ENCODE measurements at regions of chr14 and their contacts with region 1.

Region 1: GRCh38 chr14:84323978-84324377 is 1206.0 kb upstream of the FLRT2 start:
- DNase-seq: peak; percentile 57
- H3K4me3 ChIP-seq: no peak overlapping the region
- H3K27ac ChIP-seq: peak overlapping the region; percentile 64
- H3K4me1 ChIP-seq: peaks cover 16% of the 10 kb centered on the region
- H3K27me3 ChIP-seq: no peaks in the 10 kb centered on the region
- CTCF ChIP-seq: no peak
- POLR2A ChIP-seq: no peak

Region 2: DNA sequence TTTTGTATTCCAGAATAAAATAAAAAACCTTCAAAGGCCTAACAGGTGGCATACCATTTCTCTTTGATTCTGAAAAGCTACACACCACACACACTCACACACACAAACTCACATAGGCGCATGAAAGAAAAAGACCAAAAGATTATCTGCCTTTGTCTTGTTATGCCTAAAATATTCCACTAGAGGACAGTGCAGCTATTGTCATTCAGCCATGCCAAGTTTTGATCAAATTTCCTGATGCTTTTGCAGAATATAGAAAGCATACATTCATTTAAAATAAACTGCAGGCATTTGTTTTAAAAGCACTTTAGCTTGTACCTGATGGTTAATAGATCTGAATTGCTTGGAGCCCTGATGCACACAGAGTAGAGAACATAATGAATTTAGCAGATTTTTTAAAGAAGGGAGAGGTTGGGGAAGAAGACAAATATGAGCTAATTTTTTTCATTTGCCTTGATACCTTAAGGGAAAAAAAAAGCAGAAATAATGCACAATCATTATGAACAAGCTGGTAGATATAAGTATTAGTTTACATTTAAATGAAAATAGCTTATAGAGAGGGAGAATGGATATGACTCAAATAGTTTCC is 1023.4 kb before region 1 on chr14:
- CTCF ChIA-PET with region 1: interaction called, 10 read pairs
- POLR2A ChIA-PET with region 1: no interaction called
- dilution Hi-C with region 1: no loop called
- intact Hi-C with region 1: no loop called
- DNase-seq: peak; percentile 49
- H3K4me3 ChIP-seq: no peak overlapping the region
- H3K27ac ChIP-seq: no peak overlapping the region
- H3K4me1 ChIP-seq: no peaks in the 10 kb centered on the region
- H3K27me3 ChIP-seq: no peaks in the 10 kb centered on the region
- CTCF ChIP-seq: peak; percentile 62 to 68
- POLR2A ChIP-seq: no peak

Region 3: GRCh38 chr14:84036840-84037239 is 287.1 kb before region 1 on chr14:
- CTCF ChIA-PET with region 1: no interaction called
- POLR2A ChIA-PET with region 1: no interaction called
- dilution Hi-C with region 1: no loop called
- intact Hi-C with region 1: no loop called
- DNase-seq: peak; percentile 74
- H3K4me3 ChIP-seq: no peak overlapping the region
- H3K27ac ChIP-seq: no peak overlapping the region
- H3K4me1 ChIP-seq: no peaks in the 10 kb centered on the region
- H3K27me3 ChIP-seq: no peaks in the 10 kb centered on the region
- CTCF ChIP-seq: no peak
- POLR2A ChIP-seq: no peak

Region 4: GRCh38 chr14:84144166-84144565 is 179.8 kb before region 1 on chr14:
- CTCF ChIA-PET with region 1: no interaction called
- POLR2A ChIA-PET with region 1: no interaction called
- dilution Hi-C with region 1: no loop called
- intact Hi-C with region 1: loop called (anchors 10 kb)
- DNase-seq: peak; percentile 58
- H3K4me3 ChIP-seq: no peak overlapping the region
- H3K27ac ChIP-seq: no peak overlapping the region
- H3K4me1 ChIP-seq: peaks cover 9% of the 10 kb centered on the region
- H3K27me3 ChIP-seq: no peaks in the 10 kb centered on the region
- CTCF ChIP-seq: no peak
- POLR2A ChIP-seq: no peak

Region 5: GRCh38 chr14:84622357-84622756 is 298.4 kb after region 1 on chr14:
- CTCF ChIA-PET with region 1: no interaction called
- POLR2A ChIA-PET with region 1: no interaction called
- dilution Hi-C with region 1: no loop called
- intact Hi-C with region 1: no loop called
- DNase-seq: peak; percentile 94
- H3K4me3 ChIP-seq: no peak overlapping the region
- H3K27ac ChIP-seq: no peak overlapping the region
- H3K4me1 ChIP-seq: peaks cover 16% of the 10 kb centered on the region
- H3K27me3 ChIP-seq: no peaks in the 10 kb centered on the region
- CTCF ChIP-seq: no peak
- POLR2A ChIP-seq: no peak

Region 6: DNA sequence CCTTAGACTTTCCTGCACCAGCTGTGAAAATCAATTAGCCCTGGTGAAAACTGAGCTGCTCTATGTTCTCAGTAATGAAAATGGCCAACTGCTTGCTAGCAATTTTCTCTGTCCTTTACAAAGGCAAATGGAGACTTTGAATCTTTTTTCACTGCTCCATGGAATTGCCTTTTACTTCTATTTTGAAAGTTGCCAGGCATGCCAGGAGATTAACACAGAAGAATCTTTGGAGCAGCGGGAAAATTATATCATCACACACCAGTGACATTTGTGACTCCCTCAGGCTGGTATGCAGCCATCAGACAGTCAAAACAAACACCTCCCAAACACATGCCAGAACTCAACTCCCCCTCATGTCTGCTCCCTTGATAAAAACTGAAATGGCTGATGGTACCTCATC is 333.9 kb after region 1 on chr14:
- CTCF ChIA-PET with region 1: no interaction called
- POLR2A ChIA-PET with region 1: no interaction called
- dilution Hi-C with region 1: no loop called
- intact Hi-C with region 1: no loop called
- DNase-seq: no peak
- H3K4me3 ChIP-seq: no peak overlapping the region
- H3K27ac ChIP-seq: no peak overlapping the region
- H3K4me1 ChIP-seq: no peaks in the 10 kb centered on the region
- H3K27me3 ChIP-seq: no peaks in the 10 kb centered on the region
- CTCF ChIP-seq: no peak
- POLR2A ChIP-seq: no peak